ENCODE measurements at regions of chr3 and their contacts with region 1.

Region 1: GRCh38 chr3:184017672-184018423 is at the start of gene ABCC5:
- DNase-seq: peak; percentile 91 to 93
- H3K4me3 ChIP-seq: peak within 1 kb of the TSS; percentile 98
- H3K4me3 Mint-ChIP-seq: peak within 1 kb of the TSS; percentile 91
- H3K27ac Mint-ChIP-seq: peak within 1 kb of the TSS; percentile 83
- H3K4me1 ChIP-seq: no peaks in the 10 kb centered on the region
- H3K4me1 Mint-ChIP-seq: no peaks in the 10 kb centered on the region
- H3K27me3 ChIP-seq: no peaks in the 10 kb centered on the region
- H3K27me3 Mint-ChIP-seq: peaks cover 3% of the 10 kb centered on the region
- CTCF ChIP-seq: peak in 1 of 2 experiments; percentile 45
- total RNA-seq, gene ABCC5: 21.3 and 22.4 TPM in 2 replicates

Region 2: GRCh38 chr3:183904833-183905780 is 112.7 kb before region 1 on chr3:
- CTCF ChIA-PET with region 1: interaction called, 8 read pairs
- POLR2A ChIA-PET with region 1: no interaction called
- intact Hi-C with region 1: loop called (anchors 2 kb)
- DNase-seq: no peak
- H3K4me3 ChIP-seq: no peak overlapping the region
- H3K4me3 Mint-ChIP-seq: no peak overlapping the region
- H3K27ac Mint-ChIP-seq: no peak overlapping the region
- H3K4me1 ChIP-seq: peaks cover 11% of the 10 kb centered on the region
- H3K4me1 Mint-ChIP-seq: no peaks in the 10 kb centered on the region
- H3K27me3 ChIP-seq: no peaks in the 10 kb centered on the region
- H3K27me3 Mint-ChIP-seq: no peaks in the 10 kb centered on the region
- CTCF ChIP-seq: no peak

Region 3: GRCh38 chr3:183954875-183955274 is 63.0 kb before region 1 on chr3:
- CTCF ChIA-PET with region 1: no interaction called
- POLR2A ChIA-PET with region 1: no interaction called
- intact Hi-C with region 1: loop called (anchors 5 kb)
- DNase-seq: no peak
- H3K4me3 ChIP-seq: no peak overlapping the region
- H3K4me3 Mint-ChIP-seq: no peak overlapping the region
- H3K27ac Mint-ChIP-seq: no peak overlapping the region
- H3K4me1 ChIP-seq: no peaks in the 10 kb centered on the region
- H3K4me1 Mint-ChIP-seq: peaks cover under 1% of the 10 kb centered on the region
- H3K27me3 ChIP-seq: no peaks in the 10 kb centered on the region
- H3K27me3 Mint-ChIP-seq: no peaks in the 10 kb centered on the region
- CTCF ChIP-seq: no peak

Region 4: GRCh38 chr3:183966251-183966801 is 51.5 kb before region 1 on chr3:
- CTCF ChIA-PET with region 1: no interaction called
- POLR2A ChIA-PET with region 1: no interaction called
- intact Hi-C with region 1: loop called (anchors 1 kb)
- DNase-seq: peak; percentile 68
- H3K4me3 ChIP-seq: no peak overlapping the region
- H3K4me3 Mint-ChIP-seq: peak overlapping the region; percentile 42
- H3K27ac Mint-ChIP-seq: peak overlapping the region; percentile 76
- H3K4me1 ChIP-seq: peaks cover 46% of the 10 kb centered on the region
- H3K4me1 Mint-ChIP-seq: peaks cover 31% of the 10 kb centered on the region
- H3K27me3 ChIP-seq: no peaks in the 10 kb centered on the region
- H3K27me3 Mint-ChIP-seq: no peaks in the 10 kb centered on the region
- CTCF ChIP-seq: no peak

Region 5: DNA sequence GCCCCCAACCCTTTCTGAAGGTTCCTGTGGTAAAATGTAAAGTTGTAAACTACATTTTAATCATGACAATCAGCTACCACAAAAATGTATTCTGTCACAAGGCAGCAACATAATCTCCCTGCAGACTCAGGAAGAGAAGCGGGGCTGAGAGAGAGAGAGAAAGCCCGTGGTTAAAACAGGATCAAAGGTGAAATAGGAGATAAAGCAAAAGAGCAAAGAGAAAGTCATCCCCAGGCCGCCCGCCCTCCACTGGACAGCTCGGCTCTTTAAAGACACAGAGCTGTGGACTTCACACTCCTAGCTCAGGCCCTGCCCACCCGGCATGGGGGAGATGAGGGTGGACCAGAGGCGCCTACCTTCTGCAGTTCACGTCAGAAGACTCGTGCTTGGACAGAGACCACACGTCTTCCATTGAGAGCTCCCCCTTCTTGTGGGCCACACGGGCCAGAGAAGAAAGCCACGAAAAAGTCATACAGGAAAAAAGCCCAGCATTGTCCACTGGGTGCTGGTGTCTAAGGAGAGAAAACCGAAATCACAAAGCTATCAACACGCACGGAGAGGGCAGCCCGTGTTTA is 29.5 kb before region 1 on chr3:
- CTCF ChIA-PET with region 1: interaction called, 6 read pairs
- POLR2A ChIA-PET with region 1: interaction called, 3 read pairs
- intact Hi-C with region 1: loop called (anchors 1 kb)
- DNase-seq: peak; percentile 77
- H3K4me3 ChIP-seq: no peak overlapping the region
- H3K4me3 Mint-ChIP-seq: peak overlapping the region; percentile 52
- H3K27ac Mint-ChIP-seq: peak overlapping the region; percentile 72
- H3K4me1 ChIP-seq: peaks cover 40% of the 10 kb centered on the region
- H3K4me1 Mint-ChIP-seq: peaks cover 48% of the 10 kb centered on the region
- H3K27me3 ChIP-seq: no peaks in the 10 kb centered on the region
- H3K27me3 Mint-ChIP-seq: no peaks in the 10 kb centered on the region
- CTCF ChIP-seq: peak in 1 of 2 experiments; percentile 38

Region 6: GRCh38 chr3:184314363-184314699 is 296.5 kb after region 1 on chr3 and contains the start of gene EIF4G1:
- CTCF ChIA-PET with region 1: no interaction called
- POLR2A ChIA-PET with region 1: no interaction called
- intact Hi-C with region 1: no loop called
- DNase-seq: peak; percentile 92 to 94
- H3K4me3 ChIP-seq: peak within 1 kb of the TSS; percentile 89
- H3K4me3 Mint-ChIP-seq: peak within 1 kb of the TSS; percentile 85
- H3K27ac Mint-ChIP-seq: peak within 1 kb of the TSS; percentile 72
- H3K4me1 ChIP-seq: peaks cover 11% of the 10 kb centered on the region
- H3K4me1 Mint-ChIP-seq: peaks cover 9% of the 10 kb centered on the region
- H3K27me3 ChIP-seq: no peaks in the 10 kb centered on the region
- H3K27me3 Mint-ChIP-seq: no peaks in the 10 kb centered on the region
- CTCF ChIP-seq: no peak
- total RNA-seq, gene EIF4G1: 410 and 423 TPM in 2 replicates

Measured in Caco-2 (cell line).